Naive thymus-derived CD4-positive, alpha-beta T cell (primary cell): ENCODE measurements at regions of chr11 and their contacts with region 1.

Region 1: GRCh38 chr11:40099426-40100169 is 1359.9 kb downstream of the LRRC4C start:
- DNase-seq: no peak
- ATAC-seq: no peak
- H3K4me3 ChIP-seq: no peak overlapping the region
- H3K4me3 Mint-ChIP-seq: no peak overlapping the region
- H3K27ac ChIP-seq: no peak overlapping the region
- H3K27ac Mint-ChIP-seq: no peak overlapping the region
- H3K4me1 ChIP-seq: no peaks in the 10 kb centered on the region
- H3K4me1 Mint-ChIP-seq: no peaks in the 10 kb centered on the region
- H3K27me3 ChIP-seq: no peaks in the 10 kb centered on the region
- H3K27me3 Mint-ChIP-seq: no peaks in the 10 kb centered on the region

Region 2: GRCh38 chr11:40037005-40037404 is 62.6 kb before region 1 on chr11:
- CTCF ChIA-PET with region 1: no interaction called
- POLR2A ChIA-PET with region 1: no interaction called
- intact Hi-C with region 1: loop called in 1 of 2 experiments (anchors 10 kb)
- DNase-seq: no peak
- ATAC-seq: no peak
- H3K4me3 ChIP-seq: no peak overlapping the region
- H3K4me3 Mint-ChIP-seq: no peak overlapping the region
- H3K27ac ChIP-seq: no peak overlapping the region
- H3K27ac Mint-ChIP-seq: no peak overlapping the region
- H3K4me1 ChIP-seq: no peaks in the 10 kb centered on the region
- H3K4me1 Mint-ChIP-seq: no peaks in the 10 kb centered on the region
- H3K27me3 ChIP-seq: no peaks in the 10 kb centered on the region
- H3K27me3 Mint-ChIP-seq: no peaks in the 10 kb centered on the region

Region 3: DNA sequence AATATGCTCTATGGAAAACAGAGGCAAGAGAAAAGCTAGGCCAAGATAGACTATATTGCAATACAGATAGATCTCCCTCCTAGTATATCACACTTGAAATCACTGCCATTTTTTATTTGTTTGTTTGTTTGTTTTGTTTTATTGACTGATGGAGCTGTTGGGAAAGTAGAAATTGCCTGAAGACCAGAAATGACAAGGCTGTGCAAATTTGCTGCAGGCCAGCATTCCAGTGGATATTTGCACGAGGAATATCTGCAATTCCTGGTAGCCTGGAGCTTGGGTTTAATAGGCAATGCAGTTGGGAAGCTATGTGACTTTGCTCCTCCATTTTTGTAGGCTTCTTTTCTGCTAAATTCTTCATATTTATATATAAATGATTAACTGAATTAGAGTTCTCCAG is 368.2 kb after region 1 on chr11:
- CTCF ChIA-PET with region 1: no interaction called
- POLR2A ChIA-PET with region 1: no interaction called
- intact Hi-C with region 1: no loop called
- DNase-seq: no peak
- ATAC-seq: no peak
- H3K4me3 ChIP-seq: no peak overlapping the region
- H3K4me3 Mint-ChIP-seq: no peak overlapping the region
- H3K27ac ChIP-seq: no peak overlapping the region
- H3K27ac Mint-ChIP-seq: no peak overlapping the region
- H3K4me1 ChIP-seq: no peaks in the 10 kb centered on the region
- H3K4me1 Mint-ChIP-seq: no peaks in the 10 kb centered on the region
- H3K27me3 ChIP-seq: no peaks in the 10 kb centered on the region
- H3K27me3 Mint-ChIP-seq: no peaks in the 10 kb centered on the region